ENCODE measurements at regions of chr22 and their contacts with region 1.

Region 1: DNA sequence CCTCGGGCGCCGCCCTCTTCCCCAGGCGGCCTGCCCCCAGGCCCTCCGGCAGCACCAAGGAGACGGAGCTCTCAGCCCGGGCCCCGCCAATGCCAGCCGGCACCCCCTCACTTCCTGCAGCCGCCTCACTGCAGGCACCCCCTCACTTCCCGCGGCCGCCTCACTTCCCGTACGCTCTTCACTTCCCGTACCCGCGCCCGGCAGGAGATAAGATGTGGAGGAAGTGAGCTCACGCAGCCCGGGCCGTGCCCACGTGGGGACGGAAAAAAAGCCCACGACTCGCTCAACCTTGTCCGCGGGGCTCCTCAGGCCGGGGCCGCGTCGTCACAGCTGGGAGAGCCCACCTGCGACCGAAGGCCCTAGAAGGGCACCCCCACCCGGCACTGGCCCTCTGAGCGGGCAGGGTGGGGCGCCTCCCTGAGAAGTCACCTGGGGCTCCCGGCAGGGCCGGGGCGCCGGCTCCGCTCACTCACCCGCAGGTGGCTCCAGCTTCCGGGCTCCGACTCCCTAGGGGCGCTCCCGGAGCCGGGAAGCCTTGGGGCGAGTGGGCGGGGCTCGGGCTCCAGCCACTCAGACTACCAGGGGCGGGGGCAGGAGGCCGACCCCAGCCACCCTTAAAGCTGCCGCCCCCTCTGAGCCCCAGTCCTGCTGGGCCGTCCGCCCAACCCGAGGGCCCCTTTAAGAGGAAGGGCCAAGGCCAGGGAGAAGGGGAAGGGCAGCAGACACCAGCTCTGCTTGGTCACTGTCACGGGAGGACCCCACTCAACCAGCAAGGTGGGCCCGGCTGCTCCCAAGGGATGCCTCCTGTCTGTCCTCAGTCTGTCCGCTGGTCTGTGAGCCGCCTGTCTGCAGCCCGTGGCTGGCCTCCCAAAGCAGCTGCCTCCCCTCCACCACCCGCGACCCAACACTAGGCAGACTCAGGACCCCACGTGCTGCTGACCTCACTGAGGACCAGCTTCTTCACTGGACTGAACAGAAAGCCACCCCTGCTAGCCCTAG is 31.4 kb downstream of the PISD start:
- DNase-seq: peak; percentile 94
- ATAC-seq: peak; percentile 85
- H3K4me3 ChIP-seq: peak overlapping the region; percentile 95
- H3K27ac ChIP-seq: peak overlapping the region; percentile 98
- H3K4me1 ChIP-seq: peaks cover 47% of the 10 kb centered on the region
- H3K27me3 ChIP-seq: no peaks in the 10 kb centered on the region
- CTCF ChIP-seq: no peak

Region 2: GRCh38 chr22:31107894-31108218 is 522.8 kb before region 1 on chr22:
- intact Hi-C with region 1: no loop called
- DNase-seq: no peak
- ATAC-seq: no peak
- H3K4me3 ChIP-seq: peak overlapping the region; percentile 69
- H3K27ac ChIP-seq: peak overlapping the region; percentile 67
- H3K4me1 ChIP-seq: peaks cover 16% of the 10 kb centered on the region
- H3K27me3 ChIP-seq: no peaks in the 10 kb centered on the region
- CTCF ChIP-seq: no peak

Region 3: DNA sequence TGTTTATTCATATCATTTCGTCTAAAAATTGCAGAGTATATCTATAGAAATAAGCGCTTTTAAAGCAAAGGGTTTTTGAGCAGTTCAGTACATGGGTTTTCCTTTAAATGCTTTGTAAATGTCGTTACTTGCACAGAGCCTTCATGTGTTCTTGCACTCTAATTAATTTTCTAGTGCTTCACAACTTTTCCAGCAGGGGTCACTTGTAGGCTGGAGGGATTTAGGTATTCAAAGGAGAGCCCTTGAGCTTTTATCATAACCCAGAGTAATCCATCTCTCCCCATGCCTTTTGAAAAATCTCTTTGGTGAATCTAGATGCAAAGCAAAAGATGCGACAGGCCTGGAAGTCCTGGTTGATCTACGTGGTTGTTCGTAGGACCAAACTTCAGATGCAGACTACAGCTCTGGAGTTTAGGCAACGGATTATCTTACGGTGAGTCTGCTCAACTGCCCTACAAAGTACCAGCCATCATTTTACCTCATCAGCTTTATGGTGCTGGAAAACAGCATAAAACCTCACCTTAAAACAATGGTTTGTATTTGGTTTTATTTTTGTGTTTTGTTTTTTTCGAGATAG is 73.9 kb before region 1 on chr22:
- intact Hi-C with region 1: loop called (anchors 10 kb)
- DNase-seq: no peak
- ATAC-seq: peak; percentile 51
- H3K4me3 ChIP-seq: no peak overlapping the region
- H3K27ac ChIP-seq: no peak overlapping the region
- H3K4me1 ChIP-seq: no peaks in the 10 kb centered on the region
- H3K27me3 ChIP-seq: no peaks in the 10 kb centered on the region
- CTCF ChIP-seq: peak; percentile 62

Region 4: GRCh38 chr22:31585161-31585859 is 45.3 kb before region 1 on chr22:
- intact Hi-C with region 1: no loop called
- DNase-seq: no peak
- ATAC-seq: peak; percentile 74
- H3K4me3 ChIP-seq: no peak overlapping the region
- H3K27ac ChIP-seq: peak overlapping the region; percentile 65
- H3K4me1 ChIP-seq: peaks cover 22% of the 10 kb centered on the region
- H3K27me3 ChIP-seq: no peaks in the 10 kb centered on the region
- CTCF ChIP-seq: no peak